Endothelial cell of umbilical vein (primary cell): ENCODE measurements at regions of chr6 and their contacts with region 1.

Region 1: DNA sequence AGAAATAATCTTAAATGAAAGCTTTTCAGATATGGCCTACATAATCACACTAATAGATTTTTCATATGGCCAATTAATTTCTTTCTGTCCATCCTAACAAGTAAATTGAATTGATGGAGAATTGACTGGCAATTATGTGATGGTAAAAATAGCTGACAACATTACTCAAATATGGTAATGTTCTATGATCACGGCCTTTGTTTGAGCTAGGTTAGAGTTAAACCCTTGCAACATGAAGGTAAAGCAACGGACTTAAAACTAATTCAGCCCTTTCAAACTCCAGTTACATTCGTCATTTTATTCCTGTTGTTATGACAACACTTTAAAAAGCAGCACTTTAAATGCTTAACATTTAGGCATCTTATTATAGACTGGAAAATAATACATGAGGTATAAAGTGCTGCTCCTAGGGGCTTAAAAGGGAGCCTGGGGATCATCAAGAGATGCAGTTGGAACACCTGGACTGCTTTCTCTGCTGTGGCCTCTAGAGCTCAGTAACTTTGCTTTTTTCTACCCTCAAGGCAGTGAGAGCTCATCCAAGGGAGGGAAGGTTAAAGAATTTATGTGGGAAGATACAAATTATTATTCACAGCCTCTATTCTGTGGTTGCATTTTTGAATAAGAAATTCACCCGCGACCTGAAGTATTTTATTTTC is 46.9 kb downstream of the RIPOR2 start:
- DNase-seq: no peak
- H3K4me3 ChIP-seq: no peak overlapping the region
- H3K27ac ChIP-seq: no peak overlapping the region
- H3K4me1 ChIP-seq: no peaks in the 10 kb centered on the region
- H3K27me3 ChIP-seq: no peaks in the 10 kb centered on the region
- CTCF ChIP-seq: no peak
- POLR2A ChIP-seq: no peak

Region 2: DNA sequence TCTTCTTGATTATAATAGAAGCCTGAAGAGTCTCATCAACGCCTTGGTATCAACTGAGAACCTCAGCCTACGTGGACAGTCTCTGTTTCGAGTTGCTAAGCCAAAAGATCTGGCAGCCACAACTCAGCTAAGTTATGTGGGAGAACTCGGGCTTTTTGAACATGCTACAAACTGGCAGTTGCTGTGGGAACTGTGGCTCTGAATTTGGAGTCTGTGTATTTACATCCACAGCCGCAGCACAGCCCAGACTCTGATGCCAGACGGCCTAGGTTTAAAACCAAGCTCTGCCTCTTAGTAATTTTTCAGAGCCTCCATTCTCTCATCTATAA is 11.1 kb after region 1 on chr6:
- CTCF ChIA-PET with region 1: interaction called, 16 read pairs
- POLR2A ChIA-PET with region 1: no interaction called
- dilution Hi-C with region 1: no loop called
- intact Hi-C with region 1: no loop called
- DNase-seq: no peak
- H3K4me3 ChIP-seq: no peak overlapping the region
- H3K27ac ChIP-seq: no peak overlapping the region
- H3K4me1 ChIP-seq: no peaks in the 10 kb centered on the region
- H3K27me3 ChIP-seq: no peaks in the 10 kb centered on the region
- CTCF ChIP-seq: no peak
- POLR2A ChIP-seq: no peak